Naive thymus-derived CD4-positive, alpha-beta T cell (primary cell): ENCODE measurements at regions of chr11 and their contacts with region 1.

Region 1: GRCh38 chr11:59550368-59550841 is 39.1 kb downstream of the OR4D9 start:
- DNase-seq: peak; percentile 67 to 95 (median 89)
- ATAC-seq: peak; percentile 92
- H3K4me3 ChIP-seq: peak overlapping the region; percentile 59
- H3K4me3 Mint-ChIP-seq: peak overlapping the region; percentile 70 to 98 (median 92)
- H3K27ac ChIP-seq: peak overlapping the region; percentile 66
- H3K27ac Mint-ChIP-seq: peak overlapping the region; percentile 89 to 100 (median 98)
- H3K4me1 ChIP-seq: peaks cover under 1 to 4% of the 10 kb centered on the region in 2 donors
- H3K4me1 Mint-ChIP-seq: peaks cover 0 to 40% (median 32%) of the 10 kb centered on the region in 7 donors
- H3K27me3 ChIP-seq: no peaks in the 10 kb centered on the region
- H3K27me3 Mint-ChIP-seq: peaks cover 0 to 28% (median 0%) of the 10 kb centered on the region in 5 donors

Region 2: GRCh38 chr11:59810189-59810910 is 259.9 kb after region 1 on chr11 and contains the start of gene MRPL16:
- CTCF ChIA-PET with region 1: no interaction called
- POLR2A ChIA-PET with region 1: no interaction called
- intact Hi-C with region 1: loop called (anchors 2 kb)
- DNase-seq: peak; percentile 74 to 89 (median 83)
- ATAC-seq: peak; percentile 100
- H3K4me3 ChIP-seq: peak within 1 kb of the TSS; percentile 83
- H3K4me3 Mint-ChIP-seq: peak within 1 kb of the TSS; percentile 88 to 95 (median 92)
- H3K27ac ChIP-seq: peak within 1 kb of the TSS; percentile 75
- H3K27ac Mint-ChIP-seq: peak within 1 kb of the TSS; percentile 86 to 94 (median 92)
- H3K4me1 ChIP-seq: peaks cover 4 to 9% of the 10 kb centered on the region in 2 donors
- H3K4me1 Mint-ChIP-seq: peaks cover 6 to 35% (median 29%) of the 10 kb centered on the region in 7 donors
- H3K27me3 ChIP-seq: no peaks in the 10 kb centered on the region
- H3K27me3 Mint-ChIP-seq: peaks cover 0 to 7% (median 0%) of the 10 kb centered on the region in 5 donors
- total RNA-seq, gene MRPL16: 25.1 to 65.6 (median 35.2) TPM